Body of pancreas (tissue), 4 donors: ENCODE measurements at regions of chr15 and their contacts with region 1.

Region 1: GRCh38 chr15:39756806-39757522 is 25.7 kb downstream of the FSIP1 start:
- DNase-seq: peak in 3 of 4 donors; percentile 27 to 55 (median 39)
- ATAC-seq: no peak
- H3K4me3 ChIP-seq: no peak overlapping the region
- H3K27ac ChIP-seq: no peak overlapping the region
- H3K4me1 ChIP-seq: no peaks in the 10 kb centered on the region
- H3K27me3 ChIP-seq: no peaks in the 10 kb centered on the region
- CTCF ChIP-seq: peak; percentile 53 to 97 (median 72)
- POLR2A ChIP-seq: no peak

Region 2: GRCh38 chr15:38707802-38708671 is 1048.9 kb before region 1 on chr15:
- intact Hi-C with region 1: loop called (anchors 5 kb)
- DNase-seq: peak; percentile 39 to 54 (median 50)
- ATAC-seq: peak; percentile 84
- H3K4me3 ChIP-seq: no peak overlapping the region
- H3K27ac ChIP-seq: no peak overlapping the region
- H3K4me1 ChIP-seq: no peaks in the 10 kb centered on the region
- H3K27me3 ChIP-seq: no peaks in the 10 kb centered on the region
- CTCF ChIP-seq: peak; percentile 46 to 86 (median 74)
- POLR2A ChIP-seq: no peak

Region 3: DNA sequence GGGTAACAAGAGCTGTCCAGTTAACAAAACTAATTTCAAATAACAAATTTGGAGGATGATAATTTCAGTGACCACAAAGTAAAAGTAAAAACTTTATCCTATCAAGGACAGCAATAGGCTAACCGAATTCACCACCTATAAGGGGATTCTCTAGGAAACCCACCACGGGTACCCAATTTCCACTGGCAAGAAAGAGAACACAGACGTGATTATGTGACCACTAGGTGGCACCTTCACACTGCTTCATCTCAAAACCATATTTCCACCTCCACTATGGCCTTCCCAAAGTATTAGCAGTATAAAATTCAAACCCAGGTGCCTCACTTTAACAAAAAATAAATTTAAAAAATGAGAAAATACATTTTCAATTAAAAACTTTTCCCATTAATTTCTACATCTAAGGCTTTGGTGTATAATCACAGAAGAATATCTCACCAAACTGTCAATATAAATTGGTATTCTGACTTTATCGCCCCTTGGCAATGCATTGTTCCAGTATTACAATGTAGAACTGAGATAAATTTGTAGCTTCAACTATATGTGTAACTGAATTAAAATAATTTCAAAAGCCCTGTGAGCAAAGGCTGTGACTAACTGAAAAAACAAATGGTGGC is 70.9 kb before region 1 on chr15:
- intact Hi-C with region 1: loop called (anchors 5 kb)
- DNase-seq: peak; percentile 25 to 48 (median 46)
- ATAC-seq: no peak
- H3K4me3 ChIP-seq: no peak overlapping the region
- H3K27ac ChIP-seq: no peak overlapping the region
- H3K4me1 ChIP-seq: no peaks in the 10 kb centered on the region
- H3K27me3 ChIP-seq: no peaks in the 10 kb centered on the region
- CTCF ChIP-seq: peak; percentile 9 to 79 (median 66)
- POLR2A ChIP-seq: no peak